Activated CD4-positive, alpha-beta T cell treated with anti-CD3 and anti-CD28 coated beads, Interleukin-2, amount 10 ng/mL, durations not matched to agents 24 days and 14 days (primary cell): ENCODE measurements at regions of chr1 and their contacts with region 1.

Region 1: DNA sequence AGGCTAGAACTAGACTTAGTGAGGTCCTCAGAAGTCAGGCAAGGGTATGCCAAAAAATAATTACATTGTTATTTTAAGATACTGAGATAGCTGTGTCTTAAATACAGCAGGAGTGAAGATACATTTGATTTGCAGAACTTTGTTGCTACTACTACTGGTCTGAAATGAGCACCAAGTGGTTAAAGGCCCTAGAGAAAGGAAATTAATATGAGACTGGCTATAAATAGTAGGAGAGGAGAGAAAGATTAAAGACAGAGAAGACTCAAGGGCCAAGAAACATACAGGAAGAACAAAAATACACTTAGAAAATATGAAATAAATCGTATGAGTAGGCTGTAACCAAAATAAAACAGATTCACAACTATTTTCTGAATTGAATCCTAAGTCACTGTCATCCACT is 21.3 kb downstream of the HNRNPR start:
- DNase-seq: no peak
- H3K4me3 Mint-ChIP-seq: no peak overlapping the region
- H3K27ac Mint-ChIP-seq: no peak overlapping the region
- H3K4me1 Mint-ChIP-seq: peaks cover 25% of the 10 kb centered on the region
- H3K27me3 Mint-ChIP-seq: no peaks in the 10 kb centered on the region

Region 2: GRCh38 chr1:23344111-23344986 is 21.6 kb after region 1 on chr1 and contains the start of gene HNRNPR:
- intact Hi-C with region 1: no loop called
- DNase-seq: peak; percentile 99
- H3K4me3 Mint-ChIP-seq: peak within 1 kb of the TSS; percentile 90
- H3K27ac Mint-ChIP-seq: peak within 1 kb of the TSS; percentile 99
- H3K4me1 Mint-ChIP-seq: peaks cover 35% of the 10 kb centered on the region
- H3K27me3 Mint-ChIP-seq: no peaks in the 10 kb centered on the region
- total RNA-seq, gene HNRNPR: 229 and 235 TPM in 2 replicates

Region 3: DNA sequence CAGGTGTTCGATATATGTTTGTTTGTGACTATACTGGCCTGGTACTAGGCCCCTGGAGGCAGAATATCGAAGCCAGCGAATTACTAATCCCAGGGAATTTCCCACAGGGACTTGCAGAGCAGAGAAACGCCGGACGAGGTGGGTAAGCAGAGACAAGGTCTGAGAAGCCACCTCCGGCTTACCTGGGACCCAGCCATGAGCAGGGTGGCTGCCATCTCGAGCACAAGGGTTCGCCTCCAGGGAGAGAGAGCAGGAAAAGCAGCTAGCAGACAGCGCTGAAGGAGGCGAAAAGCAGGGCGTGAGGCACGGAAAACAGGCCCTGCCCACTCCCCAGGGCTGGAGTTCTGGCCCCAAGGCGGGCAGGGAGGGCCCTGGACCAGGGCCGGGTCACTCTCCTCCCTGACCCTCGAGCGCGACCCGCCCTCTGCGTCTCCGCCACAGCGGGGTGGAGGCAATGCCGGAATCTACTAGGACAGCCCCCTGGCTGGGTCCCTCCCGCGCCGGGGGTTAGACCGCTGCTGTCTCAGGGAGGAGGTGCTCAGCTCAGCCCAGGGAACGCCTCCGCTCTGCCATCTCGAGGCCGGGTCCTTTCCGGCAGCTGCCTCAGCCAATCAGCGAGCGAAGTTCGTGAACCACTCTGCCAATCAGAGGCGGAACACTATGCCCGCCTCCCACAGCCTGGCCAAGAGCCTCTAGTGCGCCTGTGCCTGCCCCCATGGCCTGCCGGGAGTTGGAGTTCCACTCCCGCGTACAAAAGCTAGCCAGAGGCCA is 45.2 kb after region 1 on chr1:
- intact Hi-C with region 1: loop called (anchors 5 kb)
- DNase-seq: peak; percentile 99
- H3K4me3 Mint-ChIP-seq: peak overlapping the region; percentile 94
- H3K27ac Mint-ChIP-seq: peak overlapping the region; percentile 99
- H3K4me1 Mint-ChIP-seq: peaks cover 33% of the 10 kb centered on the region
- H3K27me3 Mint-ChIP-seq: no peaks in the 10 kb centered on the region